ENCODE measurements at regions of chr6 and their contacts with region 1.

Region 1: DNA sequence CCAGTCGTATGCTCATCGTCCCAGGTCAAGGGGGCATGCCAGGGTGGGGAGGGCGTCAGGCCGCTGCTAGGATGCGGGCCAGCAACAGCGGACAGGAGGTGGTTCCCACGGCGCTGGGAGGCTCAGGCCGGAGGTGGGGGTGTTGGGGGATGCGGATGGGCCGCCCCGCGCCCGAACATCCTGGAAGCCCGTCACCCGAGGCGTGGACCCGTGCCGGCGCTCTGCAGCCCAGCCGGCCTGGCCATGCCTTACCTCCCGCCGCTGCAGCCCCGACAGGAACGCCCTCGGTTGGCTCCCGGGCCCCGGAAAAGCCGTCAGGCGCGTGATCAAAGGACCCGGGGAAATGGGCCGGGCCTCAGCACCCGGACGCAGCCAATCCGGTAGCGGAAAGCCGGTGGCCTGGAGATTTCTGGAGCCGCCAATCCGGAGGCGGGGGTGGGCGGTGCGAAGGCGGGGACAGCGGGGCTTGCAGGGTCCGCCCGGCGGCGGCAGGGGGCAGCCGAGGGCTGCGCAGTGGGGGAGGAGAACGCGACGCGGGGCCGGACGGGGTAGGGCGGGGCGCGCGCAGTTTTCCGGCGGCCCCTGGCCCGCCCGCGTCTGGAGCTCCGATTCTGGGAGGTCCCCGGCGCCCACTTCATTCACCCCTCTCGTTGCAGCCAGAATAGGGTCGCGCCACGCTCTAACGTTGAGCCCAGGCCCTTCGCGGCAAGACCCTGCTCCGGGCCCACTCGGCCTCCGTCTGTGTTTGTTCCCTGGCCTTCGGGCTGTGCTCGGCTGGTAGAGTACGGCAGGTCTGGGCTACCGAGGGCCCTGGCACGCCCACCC is at the start of gene SMIM29:
- DNase-seq: peak; percentile 93 to 99 (median 98)
- ATAC-seq: peak; percentile 88 to 93
- H3K4me3 Mint-ChIP-seq: peak within 1 kb of the TSS; percentile 87 to 97 (median 95)
- H3K27ac Mint-ChIP-seq: peak within 1 kb of the TSS; percentile 87 to 98 (median 96)
- H3K4me1 Mint-ChIP-seq: peaks cover 10 to 52% (median 39%) of the 10 kb centered on the region in 4 donors
- H3K27me3 Mint-ChIP-seq: no peaks in the 10 kb centered on the region
- polyA plus RNA-seq, gene SMIM29: 37.6 to 45.4 (median 45.0) TPM

Region 2: DNA sequence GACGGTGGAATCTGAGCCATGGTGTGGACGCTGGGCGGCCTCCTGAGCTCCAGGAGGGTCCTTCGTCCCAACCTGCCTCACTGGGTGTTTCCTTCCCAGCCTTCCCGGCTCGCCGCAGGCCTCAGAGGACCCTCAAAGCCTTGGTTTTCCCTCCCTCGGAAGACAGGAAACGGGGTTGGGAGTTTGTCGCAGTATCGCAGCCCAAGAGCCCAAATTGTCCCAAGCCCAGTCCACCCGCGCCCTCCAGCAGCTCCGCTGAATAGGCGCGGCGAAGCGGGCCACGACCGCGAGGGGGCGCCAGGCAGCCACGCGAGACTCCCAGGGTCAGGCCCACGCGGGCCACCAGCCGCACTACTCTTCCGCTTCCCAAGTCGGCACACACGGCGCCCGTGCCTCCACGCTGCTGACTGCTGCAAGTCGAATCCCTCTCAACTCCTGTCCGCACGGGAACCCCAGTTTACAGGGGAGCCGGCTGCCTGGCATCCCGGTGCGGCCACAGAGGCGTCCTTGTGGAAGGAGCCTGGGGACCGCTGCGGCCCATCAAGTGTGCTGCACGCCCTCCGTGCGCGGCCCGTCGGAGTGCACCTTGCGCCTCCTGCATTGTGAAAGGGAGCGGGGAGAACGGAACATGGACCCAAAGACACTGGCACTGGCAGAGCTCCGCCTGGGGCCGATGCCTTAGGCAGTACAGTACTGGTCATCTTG is 52.7 kb before region 1 on chr6:
- POLR2A ChIA-PET with region 1: interaction called, 12 read pairs
- DNase-seq: peak; percentile 77 to 96 (median 89)
- ATAC-seq: peak; percentile 99
- H3K4me3 Mint-ChIP-seq: peak overlapping the region; percentile 84 to 88 (median 86)
- H3K27ac Mint-ChIP-seq: peak overlapping the region in 7 of 10 donors; percentile 26 to 89 (median 89)
- H3K4me1 Mint-ChIP-seq: peaks cover 0 to 9% (median 6%) of the 10 kb centered on the region in 4 donors
- H3K27me3 Mint-ChIP-seq: no peaks in the 10 kb centered on the region

Region 3: DNA sequence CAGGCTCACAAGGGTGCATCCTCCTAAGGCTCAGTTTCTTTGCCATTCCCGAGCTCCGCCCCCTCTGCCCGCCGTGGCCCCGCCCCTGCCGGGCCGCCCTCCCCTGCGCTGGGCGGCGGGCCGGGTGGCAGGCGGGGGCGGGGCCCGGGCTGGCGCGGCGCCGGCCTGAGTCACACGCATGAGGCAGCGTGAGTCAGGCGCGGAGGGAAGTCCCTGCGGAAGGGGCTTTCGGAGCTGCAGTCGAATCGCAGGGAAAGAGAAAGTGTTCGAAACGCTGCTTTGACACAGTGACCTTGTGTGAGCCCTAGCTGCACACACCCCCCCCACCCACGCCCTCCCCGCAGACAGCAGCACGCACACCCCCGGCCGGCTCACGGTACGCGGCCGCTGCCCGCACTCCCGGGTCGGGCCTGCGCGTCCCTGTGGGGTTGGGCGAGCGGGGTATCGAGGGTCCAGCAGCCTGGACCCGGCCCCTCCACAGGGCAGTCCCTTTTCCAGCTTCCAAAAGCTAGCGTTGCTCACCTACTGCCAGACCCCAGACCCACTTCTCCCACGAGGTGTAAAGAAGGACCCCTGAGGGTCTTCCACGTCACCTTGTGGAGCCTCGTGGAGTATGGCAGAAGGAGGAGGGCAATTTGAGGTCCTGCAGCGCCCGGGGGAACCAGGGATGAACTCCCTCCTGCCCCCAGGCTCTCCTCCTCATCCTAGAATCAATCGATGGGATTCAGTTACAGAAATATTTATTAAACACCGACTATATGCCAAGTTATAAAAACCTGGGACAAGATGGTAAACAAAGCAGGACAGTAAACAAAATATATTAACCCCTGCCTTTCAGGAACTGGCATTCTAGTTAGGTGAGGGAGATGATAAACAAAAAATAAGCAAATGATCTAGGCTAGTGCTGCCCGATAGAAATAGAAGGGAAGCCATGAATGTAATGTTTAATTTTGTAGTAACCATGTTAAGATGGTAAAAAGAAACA is 24.7 kb before region 1 on chr6:
- POLR2A ChIA-PET with region 1: interaction called, 26 read pairs
- DNase-seq: peak; percentile 81 to 98 (median 92)
- ATAC-seq: peak; percentile 95 to 97
- H3K4me3 Mint-ChIP-seq: peak overlapping the region; percentile 65 to 77 (median 69)
- H3K27ac Mint-ChIP-seq: peak overlapping the region; percentile 82 to 96 (median 92)
- H3K4me1 Mint-ChIP-seq: peaks cover 4 to 36% (median 15%) of the 10 kb centered on the region in 4 donors
- H3K27me3 Mint-ChIP-seq: no peaks in the 10 kb centered on the region

Region 4: DNA sequence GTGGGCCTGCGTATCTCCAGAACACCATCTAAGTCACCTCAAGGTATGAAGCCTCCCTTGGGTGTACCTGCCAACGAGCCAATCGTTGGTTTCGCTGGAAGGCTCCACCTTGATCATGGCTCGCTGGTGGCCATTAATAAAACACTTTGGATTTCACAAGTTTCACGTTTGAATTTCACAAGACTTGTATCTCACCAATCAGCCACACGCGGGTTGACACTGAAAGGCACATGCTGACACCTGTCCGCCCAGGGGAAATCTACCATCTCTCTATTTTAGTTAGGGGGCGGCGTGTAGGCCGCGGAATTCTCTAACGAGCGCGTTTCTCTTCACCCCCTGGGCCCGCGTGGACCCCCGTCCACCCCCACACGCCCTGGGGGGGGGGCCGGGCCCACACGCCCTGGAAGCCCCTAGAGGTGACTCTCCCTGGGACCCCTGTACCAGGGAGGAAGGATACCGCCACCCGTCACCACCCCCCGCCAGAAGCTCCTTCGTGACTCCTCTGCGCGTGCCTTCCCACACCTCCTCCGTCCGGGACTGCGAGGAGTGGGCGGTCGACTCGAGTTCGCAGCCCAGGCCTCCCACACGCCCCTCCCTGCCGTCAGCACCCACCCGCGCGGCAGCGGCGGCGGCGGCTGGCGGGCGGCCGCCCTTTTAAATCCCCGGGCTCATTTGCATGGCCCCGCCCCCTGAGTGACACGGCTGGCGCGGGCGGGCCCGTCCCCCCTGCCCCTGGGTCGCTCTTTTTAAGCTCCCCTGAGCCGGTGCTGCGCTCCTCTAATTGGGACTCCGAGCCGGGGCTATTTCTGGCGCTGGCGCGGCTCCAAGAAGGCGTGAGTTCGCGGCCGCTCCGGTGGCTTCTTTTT is 12.6 kb before region 1 on chr6 and contains the start of gene HMGA1:
- POLR2A ChIA-PET with region 1: interaction called, 72 read pairs
- DNase-seq: peak; percentile 78 to 94 (median 86)
- ATAC-seq: peak; percentile 68 to 75
- H3K4me3 Mint-ChIP-seq: peak within 1 kb of the TSS; percentile 88 to 97 (median 94)
- H3K27ac Mint-ChIP-seq: peak within 1 kb of the TSS; percentile 94 to 99 (median 98)
- H3K4me1 Mint-ChIP-seq: peaks cover 13 to 46% (median 37%) of the 10 kb centered on the region in 4 donors
- H3K27me3 Mint-ChIP-seq: no peaks in the 10 kb centered on the region
- polyA plus RNA-seq, gene HMGA1: 28.0 to 40.9 (median 38.1) TPM

Region 5: GRCh38 chr6:34392497-34393190 is 143.7 kb after region 1 on chr6 and contains the start of gene NUDT3:
- POLR2A ChIA-PET with region 1: interaction called, 33 read pairs
- DNase-seq: peak; percentile 88 to 97 (median 94)
- ATAC-seq: peak; percentile 82 to 84
- H3K4me3 Mint-ChIP-seq: peak within 1 kb of the TSS in 9 of 10 donors; percentile 52 to 100 (median 84)
- H3K27ac Mint-ChIP-seq: peak within 1 kb of the TSS; percentile 87 to 98 (median 96)
- H3K4me1 Mint-ChIP-seq: peaks cover 8 to 29% (median 21%) of the 10 kb centered on the region in 4 donors
- H3K27me3 Mint-ChIP-seq: no peaks in the 10 kb centered on the region
- polyA plus RNA-seq, gene NUDT3: 7.4 to 10.8 (median 9.3) TPM

Region 6: GRCh38 chr6:34414999-34415858 is 166.3 kb after region 1 on chr6:
- POLR2A ChIA-PET with region 1: interaction called, 28 read pairs
- DNase-seq: peak in 9 of 10 donors; percentile 21 to 72 (median 35)
- ATAC-seq: peak; percentile 76 to 86
- H3K4me3 Mint-ChIP-seq: no peak overlapping the region
- H3K27ac Mint-ChIP-seq: peak overlapping the region in 4 of 10 donors; percentile 6 to 75 (median 53)
- H3K4me1 Mint-ChIP-seq: peaks cover 0 to 14% (median 9%) of the 10 kb centered on the region in 4 donors
- H3K27me3 Mint-ChIP-seq: no peaks in the 10 kb centered on the region